ENCODE measurements at regions of chr11 and their contacts with region 1.

Region 1: DNA sequence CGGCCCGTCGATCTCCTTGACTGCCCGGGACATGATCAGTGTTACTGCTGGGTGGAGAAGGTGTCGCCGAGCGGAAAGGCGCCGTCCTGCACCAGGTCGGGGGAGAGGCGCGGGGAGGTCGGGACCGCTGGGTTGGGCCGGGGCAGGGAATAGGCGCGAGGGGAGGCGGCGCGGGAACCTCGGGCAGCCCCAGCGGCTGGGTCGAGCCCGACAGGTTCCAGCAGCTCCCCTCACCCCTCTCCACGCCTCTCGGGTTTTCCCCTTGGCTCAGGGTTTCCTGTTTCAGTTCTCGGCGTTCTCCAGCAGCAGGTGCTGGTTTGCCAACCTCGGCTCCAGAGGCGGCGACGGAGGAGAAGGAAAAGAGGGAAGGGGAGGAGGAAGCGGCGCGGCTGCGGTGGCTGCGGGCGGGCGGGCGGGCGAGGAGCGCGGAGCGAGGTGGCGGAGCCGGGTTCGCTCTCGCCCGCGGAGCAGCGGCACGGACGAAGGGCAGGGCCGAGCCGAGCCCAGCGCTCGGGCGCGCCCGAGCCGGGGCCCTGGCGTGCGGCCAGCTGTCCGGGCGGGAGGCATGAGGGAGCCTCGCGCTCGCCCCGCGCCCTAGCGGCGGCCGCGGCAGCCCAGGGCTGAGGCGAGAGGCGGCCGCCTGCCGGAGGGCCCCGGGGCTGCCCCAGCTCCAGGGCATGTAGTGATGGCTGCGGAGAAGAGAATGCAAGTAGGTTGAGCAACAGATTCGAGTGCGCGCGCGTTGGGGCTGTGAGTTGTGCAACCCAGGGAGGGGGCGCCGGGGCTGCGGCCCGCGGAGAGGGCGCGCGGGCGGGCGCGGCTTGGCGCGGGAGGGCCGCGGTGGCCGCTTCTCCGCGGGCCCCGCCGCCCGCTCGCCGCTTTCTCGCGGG is at the start of gene ZC3H12C:
- DNase-seq: peak; percentile 85 to 92
- ATAC-seq: peak; percentile 80
- H3K4me3 ChIP-seq: peak within 1 kb of the TSS; percentile 75 to 80
- H3K27ac ChIP-seq: peak within 1 kb of the TSS; percentile 78 to 94
- H3K4me1 ChIP-seq: peaks cover 0 to 9% of the 10 kb centered on the region in 2 donors
- H3K27me3 ChIP-seq: no peaks in the 10 kb centered on the region
- total RNA-seq, gene ZC3H12C: 17.2 to 17.9 TPM

Region 2: DNA sequence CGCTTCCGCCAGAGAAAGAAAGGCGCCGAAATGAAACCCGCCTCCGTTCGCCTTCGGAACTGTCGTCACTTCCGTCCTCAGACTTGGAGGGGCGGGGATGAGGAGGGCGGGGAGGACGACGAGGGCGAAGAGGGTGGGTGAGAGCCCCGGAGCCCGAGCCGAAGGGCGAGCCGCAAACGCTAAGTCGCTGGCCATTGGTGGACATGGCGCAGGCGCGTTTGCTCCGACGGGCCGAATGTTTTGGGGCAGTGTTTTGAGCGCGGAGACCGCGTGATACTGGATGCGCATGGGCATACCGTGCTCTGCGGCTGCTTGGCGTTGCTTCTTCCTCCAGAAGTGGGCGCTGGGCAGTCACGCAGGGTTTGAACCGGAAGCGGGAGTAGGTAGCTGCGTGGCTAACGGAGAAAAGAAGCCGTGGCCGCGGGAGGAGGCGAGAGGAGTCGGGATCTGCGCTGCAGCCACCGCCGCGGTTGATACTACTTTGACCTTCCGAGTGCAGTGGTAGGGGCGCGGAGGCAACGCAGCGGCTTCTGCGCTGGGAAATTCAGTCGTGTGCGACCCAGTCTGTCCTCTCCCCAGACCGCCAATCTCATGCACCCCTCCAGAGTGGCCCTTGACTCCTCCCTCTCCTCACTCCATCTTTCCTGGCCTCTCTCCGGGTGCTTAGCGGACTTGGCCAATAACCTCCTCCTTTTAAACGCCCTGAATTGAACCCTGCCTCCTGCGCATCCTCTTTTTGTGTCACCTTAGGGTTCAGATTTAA is 1869.9 kb before region 1 on chr11 and contains the start of gene ATM:
- intact Hi-C with region 1: loop called in 1 of 2 experiments (anchors 10 kb)
- DNase-seq: peak; percentile 100
- ATAC-seq: peak; percentile 99
- H3K4me3 ChIP-seq: peak within 1 kb of the TSS; percentile 77 to 94
- H3K27ac ChIP-seq: peak within 1 kb of the TSS; percentile 67 to 95
- H3K4me1 ChIP-seq: peaks cover 2 to 13% of the 10 kb centered on the region in 2 donors
- H3K27me3 ChIP-seq: no peaks in the 10 kb centered on the region
- total RNA-seq, gene ATM: 66.3 to 123 TPM

Region 3: DNA sequence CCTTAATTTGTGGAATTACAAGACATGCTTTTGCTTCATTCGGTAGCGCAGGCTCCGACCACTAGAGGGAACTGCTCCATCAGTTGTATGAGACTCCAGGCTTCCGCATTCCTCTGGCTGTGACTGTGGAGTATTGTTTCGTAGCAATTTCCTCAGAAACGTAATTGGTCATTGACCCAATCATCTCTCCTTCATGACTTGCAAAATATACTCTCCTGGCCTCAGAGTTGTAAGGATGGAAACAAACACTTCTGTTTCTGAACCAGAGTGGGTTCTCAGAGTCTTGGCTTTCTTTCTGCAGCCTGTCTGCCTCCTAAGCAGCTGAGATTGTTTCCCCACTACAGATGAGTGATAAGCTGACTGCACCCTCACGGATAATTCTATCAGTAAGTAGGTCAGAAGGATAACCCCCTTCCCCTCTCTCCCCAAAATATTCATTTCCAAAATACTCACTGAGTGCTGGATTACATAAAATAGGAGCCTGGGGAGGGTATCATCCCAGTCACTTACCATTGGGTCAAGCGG is 146.4 kb before region 1 on chr11:
- intact Hi-C with region 1: loop called (anchors 5 kb)
- DNase-seq: peak; percentile 90 to 92
- ATAC-seq: peak; percentile 97
- H3K4me3 ChIP-seq: peak overlapping the region; percentile 29 to 84
- H3K27ac ChIP-seq: peak overlapping the region; percentile 28 to 86
- H3K4me1 ChIP-seq: peaks cover 0 to 3% of the 10 kb centered on the region in 2 donors
- H3K27me3 ChIP-seq: no peaks in the 10 kb centered on the region

Region 4: GRCh38 chr11:110000031-110000502 is 92.7 kb before region 1 on chr11:
- intact Hi-C with region 1: loop called in 1 of 2 experiments (anchors 5 kb)
- DNase-seq: no peak
- ATAC-seq: peak; percentile 77
- H3K4me3 ChIP-seq: no peak overlapping the region
- H3K27ac ChIP-seq: no peak overlapping the region
- H3K4me1 ChIP-seq: peaks cover 0 to 1% of the 10 kb centered on the region in 2 donors
- H3K27me3 ChIP-seq: no peaks in the 10 kb centered on the region

Region 5: GRCh38 chr11:110019675-110020074 is 73.1 kb before region 1 on chr11:
- intact Hi-C with region 1: no loop called
- DNase-seq: no peak
- ATAC-seq: no peak
- H3K4me3 ChIP-seq: no peak overlapping the region
- H3K27ac ChIP-seq: no peak overlapping the region
- H3K4me1 ChIP-seq: no peaks in the 10 kb centered on the region
- H3K27me3 ChIP-seq: no peaks in the 10 kb centered on the region

Region 6: GRCh38 chr11:110158317-110159200 is 65.8 kb after region 1 on chr11:
- intact Hi-C with region 1: loop called in 1 of 2 experiments (anchors 10 kb)
- DNase-seq: no peak
- ATAC-seq: no peak
- H3K4me3 ChIP-seq: no peak overlapping the region
- H3K27ac ChIP-seq: no peak overlapping the region
- H3K4me1 ChIP-seq: no peaks in the 10 kb centered on the region
- H3K27me3 ChIP-seq: no peaks in the 10 kb centered on the region

Region 7: DNA sequence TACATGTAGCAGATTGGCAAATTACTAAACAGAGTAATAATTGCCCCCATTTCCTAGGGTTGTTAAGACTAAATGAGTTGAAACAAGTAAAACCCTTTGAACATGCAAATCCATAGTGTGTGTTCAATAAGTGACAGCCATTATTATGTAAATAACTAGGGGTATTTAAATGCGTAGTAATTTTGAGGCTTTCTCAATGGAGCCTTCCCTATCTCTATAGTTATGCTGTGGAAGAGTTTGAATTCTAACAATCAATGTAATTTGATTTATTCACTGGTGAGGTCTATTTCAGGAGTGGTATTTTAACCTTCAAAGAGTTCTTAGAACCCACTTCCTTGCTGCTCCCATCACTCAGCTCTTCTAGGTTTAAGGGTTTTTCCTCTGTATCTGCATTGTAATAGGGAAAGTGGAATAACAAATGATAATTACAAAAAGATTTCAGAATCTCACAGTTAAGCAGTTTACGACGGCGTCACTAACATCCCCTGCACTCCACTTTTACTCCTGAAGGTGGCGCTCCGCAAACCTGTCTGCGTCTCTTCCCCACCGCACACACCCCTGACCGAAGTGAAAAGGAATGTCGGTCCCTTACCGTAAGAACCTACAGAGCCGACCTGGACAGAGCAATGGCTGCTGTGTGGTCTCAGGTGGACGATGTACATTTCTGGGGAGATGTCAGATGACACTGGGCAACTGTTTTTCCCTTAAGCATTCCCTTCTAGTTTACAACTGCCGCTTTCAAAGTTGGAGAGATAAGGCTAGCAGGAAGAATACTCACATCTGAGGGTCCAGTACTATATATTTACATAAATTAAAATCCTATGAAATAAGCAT is 81.3 kb after region 1 on chr11:
- intact Hi-C with region 1: loop called in 1 of 2 experiments (anchors 10 kb)
- DNase-seq: peak; percentile 74 to 83
- ATAC-seq: peak; percentile 85
- H3K4me3 ChIP-seq: no peak overlapping the region
- H3K27ac ChIP-seq: no peak overlapping the region
- H3K4me1 ChIP-seq: no peaks in the 10 kb centered on the region
- H3K27me3 ChIP-seq: no peaks in the 10 kb centered on the region

Region 8: DNA sequence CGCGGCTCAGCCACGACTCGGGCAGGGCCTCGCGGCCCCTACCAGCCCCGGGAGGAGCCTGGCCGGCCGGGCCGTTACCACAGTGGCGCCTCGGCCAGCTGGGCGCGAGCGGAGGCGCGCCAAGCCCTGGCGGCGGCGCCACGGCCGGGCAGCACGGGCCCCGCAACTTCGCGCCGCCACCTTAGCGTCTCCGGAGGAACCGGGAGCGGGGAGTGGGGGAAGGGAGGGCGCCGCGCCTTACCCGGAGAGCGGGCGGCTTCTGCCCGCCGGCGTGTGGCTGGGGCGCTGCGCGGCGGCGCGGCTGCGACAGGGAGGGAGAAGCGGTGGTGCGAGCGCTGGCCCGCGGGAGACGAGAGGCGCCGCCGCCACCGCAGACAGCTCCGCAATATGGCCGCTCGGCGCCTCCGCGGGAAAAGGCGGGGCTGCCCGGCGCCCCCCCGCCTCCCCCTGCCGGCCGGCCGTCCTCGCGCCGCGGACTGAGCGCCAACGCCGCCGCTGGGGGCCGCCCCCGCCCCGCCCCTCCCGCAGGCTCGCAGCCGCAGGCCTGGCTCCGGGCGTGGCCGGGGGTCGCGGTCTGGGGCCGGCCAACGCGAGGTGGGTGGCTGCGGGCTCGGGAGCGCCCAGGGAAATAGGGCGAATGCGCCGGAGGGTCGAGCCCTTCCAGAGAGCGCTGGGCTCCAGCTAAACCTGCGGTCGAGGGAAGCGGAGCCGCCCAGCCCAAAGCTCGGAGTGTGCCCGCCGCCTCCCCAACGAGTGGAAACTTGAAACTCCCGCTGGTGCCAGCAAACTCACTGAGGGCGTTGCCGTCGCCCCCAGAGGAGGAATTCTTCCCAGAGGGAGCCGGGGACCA is 203.7 kb after region 1 on chr11 and contains the start of gene RDX:
- intact Hi-C with region 1: loop called in 1 of 2 experiments (anchors 5 kb)
- DNase-seq: peak; percentile 86 to 93
- ATAC-seq: peak; percentile 88
- H3K4me3 ChIP-seq: peak within 1 kb of the TSS; percentile 74 to 96
- H3K27ac ChIP-seq: peak within 1 kb of the TSS; percentile 87 to 94
- H3K4me1 ChIP-seq: no peaks in the 10 kb centered on the region
- H3K27me3 ChIP-seq: no peaks in the 10 kb centered on the region
- total RNA-seq, gene RDX: 110 to 144 TPM

Measured in aorta (tissue), 5 donors.